CD4-positive, alpha-beta T cell (primary cell): ENCODE measurements at regions of chr13 and their contacts with region 1.

Region 1: DNA sequence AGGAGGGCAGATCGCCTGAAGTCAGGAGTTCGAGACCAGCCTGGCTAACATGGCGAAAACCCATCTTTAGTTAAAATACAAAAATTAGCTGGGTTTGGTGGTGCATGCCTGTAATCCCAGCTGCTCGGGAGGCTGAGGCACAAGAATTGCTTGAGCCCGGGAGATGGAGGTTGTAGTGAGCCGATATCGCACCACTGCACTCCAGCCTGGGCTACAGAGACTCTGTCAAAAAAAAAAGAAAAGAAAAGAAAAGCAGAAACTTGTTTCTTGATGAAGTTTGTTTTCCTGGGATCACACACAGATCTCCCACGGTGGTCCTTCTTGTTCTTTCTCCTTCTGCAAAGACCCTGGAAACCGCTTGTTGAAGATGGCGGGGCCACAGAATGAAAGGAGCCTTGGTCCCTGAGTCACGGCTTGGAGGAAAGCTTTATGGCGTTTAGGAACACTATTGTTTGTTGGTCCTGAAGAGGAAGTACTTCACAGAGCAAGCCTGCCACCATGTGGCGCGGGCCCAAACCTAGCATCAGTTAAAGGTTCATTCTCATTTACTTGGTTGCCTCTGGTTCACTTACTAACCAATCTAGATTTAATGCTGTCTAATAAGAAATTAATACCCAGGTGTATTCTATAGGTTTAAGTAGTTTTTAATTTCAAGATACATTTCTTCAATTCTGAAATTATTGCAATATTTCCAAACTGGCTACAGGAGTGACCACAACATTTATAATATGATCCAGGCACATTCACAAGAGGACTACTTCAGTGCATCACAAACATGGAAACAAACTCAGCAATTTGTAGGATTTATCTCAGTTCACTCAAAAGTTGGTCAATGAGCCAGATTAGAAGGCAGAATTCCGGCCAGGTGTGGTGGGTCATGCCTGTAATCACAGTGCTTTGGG is 21.3 kb upstream of the ARL11 start:
- DNase-seq: peak; percentile 66 to 88 (median 76)
- ATAC-seq: peak; percentile 99
- H3K4me3 ChIP-seq: peak overlapping the region; percentile 24
- H3K4me3 Mint-ChIP-seq: peak overlapping the region; percentile 86
- H3K27ac ChIP-seq: no peak overlapping the region
- H3K27ac Mint-ChIP-seq: no peak overlapping the region
- H3K4me1 ChIP-seq: peaks cover 9% of the 10 kb centered on the region
- H3K4me1 Mint-ChIP-seq: peaks cover 5% of the 10 kb centered on the region
- H3K27me3 ChIP-seq: no peaks in the 10 kb centered on the region
- H3K27me3 Mint-ChIP-seq: no peaks in the 10 kb centered on the region
- CTCF ChIP-seq: peak; percentile 82

Region 2: GRCh38 chr13:49240017-49240416 is 367.0 kb before region 1 on chr13:
- CTCF ChIA-PET with region 1: no interaction called
- POLR2A ChIA-PET with region 1: no interaction called
- intact Hi-C with region 1: loop called (anchors 5 kb)
- DNase-seq: peak in 8 of 14 experiments; percentile 21 to 74 (median 46)
- ATAC-seq: peak; percentile 70
- H3K4me3 ChIP-seq: no peak overlapping the region
- H3K4me3 Mint-ChIP-seq: no peak overlapping the region
- H3K27ac ChIP-seq: no peak overlapping the region
- H3K27ac Mint-ChIP-seq: no peak overlapping the region
- H3K4me1 ChIP-seq: no peaks in the 10 kb centered on the region
- H3K4me1 Mint-ChIP-seq: no peaks in the 10 kb centered on the region
- H3K27me3 ChIP-seq: peaks cover 0 to 7% of the 10 kb centered on the region in 2 experiments
- H3K27me3 Mint-ChIP-seq: peaks cover 12% of the 10 kb centered on the region
- CTCF ChIP-seq: peak; percentile 46

Region 3: GRCh38 chr13:49421391-49421790 is 185.6 kb before region 1 on chr13:
- CTCF ChIA-PET with region 1: interaction called, 3 read pairs
- POLR2A ChIA-PET with region 1: no interaction called
- intact Hi-C with region 1: loop called (anchors 2 kb)
- DNase-seq: peak in 10 of 14 experiments; percentile 5 to 57 (median 25)
- ATAC-seq: peak; percentile 59
- H3K4me3 ChIP-seq: no peak overlapping the region
- H3K4me3 Mint-ChIP-seq: no peak overlapping the region
- H3K27ac ChIP-seq: no peak overlapping the region
- H3K27ac Mint-ChIP-seq: no peak overlapping the region
- H3K4me1 ChIP-seq: no peaks in the 10 kb centered on the region
- H3K4me1 Mint-ChIP-seq: no peaks in the 10 kb centered on the region
- H3K27me3 ChIP-seq: no peaks in the 10 kb centered on the region
- H3K27me3 Mint-ChIP-seq: no peaks in the 10 kb centered on the region
- CTCF ChIP-seq: no peak

Region 4: GRCh38 chr13:49669735-49670309 is 62.8 kb after region 1 on chr13:
- CTCF ChIA-PET with region 1: no interaction called
- POLR2A ChIA-PET with region 1: no interaction called
- intact Hi-C with region 1: no loop called
- DNase-seq: peak in 8 of 14 experiments; percentile 4 to 52 (median 28)
- ATAC-seq: peak; percentile 64
- H3K4me3 ChIP-seq: no peak overlapping the region
- H3K4me3 Mint-ChIP-seq: no peak overlapping the region
- H3K27ac ChIP-seq: no peak overlapping the region
- H3K27ac Mint-ChIP-seq: no peak overlapping the region
- H3K4me1 ChIP-seq: no peaks in the 10 kb centered on the region
- H3K4me1 Mint-ChIP-seq: peaks cover 5% of the 10 kb centered on the region
- H3K27me3 ChIP-seq: no peaks in the 10 kb centered on the region
- H3K27me3 Mint-ChIP-seq: no peaks in the 10 kb centered on the region
- CTCF ChIP-seq: peak; percentile 59

Region 5: GRCh38 chr13:50309882-50310594 is 703.0 kb after region 1 on chr13:
- CTCF ChIA-PET with region 1: no interaction called
- POLR2A ChIA-PET with region 1: no interaction called
- intact Hi-C with region 1: no loop called
- DNase-seq: peak in 1 of 14 experiments; percentile 22
- ATAC-seq: no peak
- H3K4me3 ChIP-seq: no peak overlapping the region
- H3K4me3 Mint-ChIP-seq: peak overlapping the region; percentile 1
- H3K27ac ChIP-seq: no peak overlapping the region
- H3K27ac Mint-ChIP-seq: no peak overlapping the region
- H3K4me1 ChIP-seq: peaks cover 11% of the 10 kb centered on the region
- H3K4me1 Mint-ChIP-seq: peaks cover 18% of the 10 kb centered on the region
- H3K27me3 ChIP-seq: no peaks in the 10 kb centered on the region
- H3K27me3 Mint-ChIP-seq: no peaks in the 10 kb centered on the region
- CTCF ChIP-seq: no peak